BJ (cell line): ENCODE measurements at regions of chr6 and their contacts with region 1.

Region 1: DNA sequence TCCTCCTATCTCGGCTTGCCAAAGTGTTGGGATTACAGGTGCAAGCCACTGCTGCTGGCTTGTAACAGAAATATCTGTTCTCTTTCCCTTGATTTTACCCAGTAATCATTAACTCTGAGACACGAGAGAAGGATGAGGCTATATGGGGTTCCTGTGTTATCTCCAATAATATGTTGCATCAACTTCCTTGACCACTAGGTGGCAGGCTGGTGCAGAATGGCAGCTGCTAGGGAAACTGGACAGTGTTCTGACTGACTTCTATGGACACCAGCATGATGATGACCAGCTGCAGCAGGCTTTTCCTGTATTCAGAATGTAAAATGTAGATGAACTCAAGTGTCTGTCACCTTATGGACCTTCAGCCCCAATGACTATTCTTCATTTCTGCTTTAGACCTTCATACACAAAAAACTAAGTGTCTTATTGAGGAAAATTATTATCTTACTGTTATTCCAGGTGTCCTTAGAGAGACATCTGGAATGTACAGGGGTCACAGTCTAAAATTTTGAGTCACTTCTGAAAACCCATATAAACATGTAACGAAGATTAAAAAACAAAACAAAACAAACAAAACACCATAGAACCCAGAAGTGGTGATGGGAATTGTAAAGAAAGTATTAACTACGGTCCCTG is 20.4 kb upstream of the CD109 start:
- DNase-seq: no peak
- H3K4me3 ChIP-seq: no peak overlapping the region
- H3K27me3 ChIP-seq: peaks cover 2% of the 10 kb centered on the region; the same call in 1 of the 2 replicates
- CTCF ChIP-seq: peak; percentile 87

Region 2: DNA sequence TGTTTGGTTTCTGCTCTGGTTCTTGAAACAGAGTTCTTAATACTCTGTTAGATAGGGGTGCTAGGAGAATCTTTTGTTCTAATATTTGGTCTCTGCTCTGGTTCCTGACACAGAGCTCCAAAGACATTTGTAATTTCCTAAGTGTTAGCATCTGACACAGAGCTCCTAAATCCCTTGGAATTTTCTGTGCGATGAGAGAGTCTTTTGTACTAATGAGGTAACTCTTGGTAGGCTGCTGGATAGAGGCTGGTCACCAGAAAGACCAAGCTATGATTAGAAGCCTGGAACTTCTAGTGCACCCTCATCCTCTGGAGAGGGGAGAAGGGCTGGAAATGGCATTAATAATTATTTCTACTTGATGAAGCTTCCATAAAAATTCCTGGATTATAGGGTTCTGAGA is 12.8 kb after region 1 on chr6:
- CTCF ChIA-PET with region 1: interaction called, 10 read pairs
- POLR2A ChIA-PET with region 1: no interaction called
- DNase-seq: no peak
- H3K4me3 ChIP-seq: no peak overlapping the region
- H3K27me3 ChIP-seq: no peaks in the 10 kb centered on the region
- CTCF ChIP-seq: no peak

Region 3: GRCh38 chr6:73739096-73739495 is 63.5 kb after region 1 on chr6:
- CTCF ChIA-PET with region 1: interaction called, 169 read pairs
- POLR2A ChIA-PET with region 1: no interaction called
- DNase-seq: no peak
- H3K4me3 ChIP-seq: no peak overlapping the region
- H3K27me3 ChIP-seq: no peaks in the 10 kb centered on the region
- CTCF ChIP-seq: peak; percentile 67

Region 4: GRCh38 chr6:74044417-74045096 is 369.0 kb after region 1 on chr6:
- CTCF ChIA-PET with region 1: no interaction called
- POLR2A ChIA-PET with region 1: no interaction called
- DNase-seq: no peak
- H3K4me3 ChIP-seq: no peak overlapping the region
- H3K27me3 ChIP-seq: no peaks in the 10 kb centered on the region
- CTCF ChIP-seq: no peak